ENCODE measurements at regions of chr7 and their contacts with region 1.

Region 1: GRCh38 chr7:23474094-23474828 is 4.0 kb upstream of the IGF2BP3 start:
- DNase-seq: peak; percentile 91
- H3K4me3 Mint-ChIP-seq: peak overlapping the region; percentile 63
- H3K27ac Mint-ChIP-seq: peak overlapping the region; percentile 42
- H3K4me1 Mint-ChIP-seq: peaks cover 27% of the 10 kb centered on the region
- H3K27me3 Mint-ChIP-seq: peaks cover 60% of the 10 kb centered on the region

Region 2: GRCh38 chr7:23462846-23463245 is 11.4 kb before region 1 on chr7:
- CTCF ChIA-PET with region 1: interaction called, 11 read pairs
- POLR2A ChIA-PET with region 1: no interaction called
- intact Hi-C with region 1: no loop called
- DNase-seq: peak; percentile 32
- H3K4me3 Mint-ChIP-seq: no peak overlapping the region
- H3K27ac Mint-ChIP-seq: no peak overlapping the region
- H3K4me1 Mint-ChIP-seq: peaks cover 8% of the 10 kb centered on the region
- H3K27me3 Mint-ChIP-seq: peaks cover 56% of the 10 kb centered on the region

Region 3: DNA sequence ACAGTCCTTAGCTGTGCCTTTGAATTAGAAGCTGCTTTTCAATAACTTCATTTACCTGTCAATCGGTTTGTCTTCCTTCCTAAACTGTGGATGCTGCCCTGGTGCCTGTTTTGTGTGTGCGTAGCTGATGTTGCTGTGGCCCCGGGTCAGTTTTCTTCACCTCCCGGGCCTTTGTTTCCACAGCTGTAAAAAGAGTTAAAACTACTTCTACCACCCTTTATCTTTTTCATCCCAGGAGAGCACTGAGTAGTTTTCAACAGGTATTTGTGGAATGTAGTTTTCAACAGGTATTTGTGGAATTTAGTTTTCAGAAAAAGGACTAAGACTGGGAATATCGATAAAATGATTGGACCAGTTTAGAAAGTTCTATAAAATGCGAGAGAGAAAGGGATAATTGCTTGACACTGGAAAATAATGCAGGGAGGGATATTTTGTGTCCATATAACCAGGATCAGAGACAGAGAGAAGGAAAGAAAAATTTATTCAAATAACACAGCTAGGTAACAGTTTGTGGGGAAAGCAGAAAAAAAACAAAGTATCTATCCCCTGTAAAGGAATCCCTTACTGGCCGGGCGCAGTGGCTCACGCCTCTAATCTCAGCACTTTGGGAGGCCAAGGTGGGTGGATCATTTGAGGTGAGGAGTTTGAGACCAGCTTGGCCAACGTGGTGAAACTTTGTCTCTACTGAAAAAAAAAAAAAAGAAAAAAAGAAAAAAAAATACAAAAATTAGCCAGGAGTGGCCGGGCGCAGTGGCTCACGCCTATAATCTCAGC is 11.9 kb after region 1 on chr7:
- CTCF ChIA-PET with region 1: no interaction called
- POLR2A ChIA-PET with region 1: no interaction called
- intact Hi-C with region 1: no loop called
- DNase-seq: no peak
- H3K4me3 Mint-ChIP-seq: no peak overlapping the region
- H3K27ac Mint-ChIP-seq: no peak overlapping the region
- H3K4me1 Mint-ChIP-seq: peaks cover 3% of the 10 kb centered on the region
- H3K27me3 Mint-ChIP-seq: no peaks in the 10 kb centered on the region